H1 (cell line): ENCODE measurements at regions of chr17 and their contacts with region 1.

Region 1: GRCh38 chr17:77214743-77215142 is 74.0 kb downstream of the SEC14L1 start:
- DNase-seq: peak; percentile 27 to 63
- H3K4me3 ChIP-seq: no peak overlapping the region
- H3K27ac ChIP-seq: no peak overlapping the region
- H3K4me1 ChIP-seq: no peaks in the 10 kb centered on the region; a peak in 1 of 7 replicates
- H3K27me3 ChIP-seq: no peaks in the 10 kb centered on the region
- CTCF ChIP-seq: peak; percentile 87 to 99 (median 95)
- EP300 ChIP-seq: no peak
- POLR2A ChIP-seq: no peak
- RAD21 ChIP-seq: peak; percentile 67 to 77

Region 2: GRCh38 chr17:76935331-76935730 is 279.4 kb before region 1 on chr17:
- CTCF ChIA-PET with region 1: no interaction called
- POLR2A ChIA-PET with region 1: no interaction called
- DNase-seq: no peak
- H3K4me3 ChIP-seq: no peak overlapping the region
- H3K27ac ChIP-seq: no peak overlapping the region
- H3K4me1 ChIP-seq: peaks cover 0 to 3% (median under 1%) of the 10 kb centered on the region in 4 experiments; a peak in 2 of 7 replicates
- H3K27me3 ChIP-seq: no peaks in the 10 kb centered on the region
- CTCF ChIP-seq: no peak
- EP300 ChIP-seq: no peak
- POLR2A ChIP-seq: no peak
- RAD21 ChIP-seq: no peak

Region 3: DNA sequence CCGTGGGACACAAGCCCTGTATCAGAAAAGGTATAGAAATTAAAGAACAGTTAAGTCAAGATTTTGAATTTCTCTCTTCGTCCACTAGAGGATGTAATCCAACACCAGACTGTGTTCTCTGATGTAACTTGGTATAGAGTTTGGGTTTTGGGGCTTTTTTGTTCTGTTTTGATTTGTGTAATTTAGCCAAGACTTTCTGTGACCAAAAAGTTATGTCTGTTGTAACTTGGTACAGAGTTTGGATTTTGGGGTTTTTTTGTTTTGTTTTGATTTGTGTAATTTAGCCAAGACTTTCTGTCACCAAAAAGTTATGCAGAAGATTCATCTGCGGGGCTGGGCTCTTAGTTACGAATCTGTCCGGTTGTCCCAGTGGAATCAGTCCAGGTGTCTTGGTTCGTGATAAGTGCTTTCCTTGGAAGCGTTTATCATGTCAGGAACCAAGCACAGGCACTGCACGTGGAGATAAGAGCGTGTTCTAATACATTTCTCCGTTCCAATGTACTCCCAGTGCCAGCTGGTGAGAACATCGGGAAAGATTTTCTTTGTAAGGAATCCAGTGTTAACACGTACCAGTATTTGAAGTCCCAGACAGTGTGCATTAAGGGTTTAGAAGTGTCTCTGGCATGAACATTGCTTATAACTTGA is 118.1 kb before region 1 on chr17:
- CTCF ChIA-PET with region 1: interaction called, 10 read pairs
- POLR2A ChIA-PET with region 1: interaction called, 10 read pairs
- DNase-seq: no peak
- H3K4me3 ChIP-seq: no peak overlapping the region
- H3K27ac ChIP-seq: no peak overlapping the region
- H3K4me1 ChIP-seq: no peaks in the 10 kb centered on the region; a peak in 2 of 7 replicates
- H3K27me3 ChIP-seq: no peaks in the 10 kb centered on the region
- CTCF ChIP-seq: peak in 2 of 3 experiments; percentile 38 to 46; a peak in 2 of 4 replicates
- EP300 ChIP-seq: no peak
- POLR2A ChIP-seq: no peak
- RAD21 ChIP-seq: peak; percentile 52 to 58

Region 4: DNA sequence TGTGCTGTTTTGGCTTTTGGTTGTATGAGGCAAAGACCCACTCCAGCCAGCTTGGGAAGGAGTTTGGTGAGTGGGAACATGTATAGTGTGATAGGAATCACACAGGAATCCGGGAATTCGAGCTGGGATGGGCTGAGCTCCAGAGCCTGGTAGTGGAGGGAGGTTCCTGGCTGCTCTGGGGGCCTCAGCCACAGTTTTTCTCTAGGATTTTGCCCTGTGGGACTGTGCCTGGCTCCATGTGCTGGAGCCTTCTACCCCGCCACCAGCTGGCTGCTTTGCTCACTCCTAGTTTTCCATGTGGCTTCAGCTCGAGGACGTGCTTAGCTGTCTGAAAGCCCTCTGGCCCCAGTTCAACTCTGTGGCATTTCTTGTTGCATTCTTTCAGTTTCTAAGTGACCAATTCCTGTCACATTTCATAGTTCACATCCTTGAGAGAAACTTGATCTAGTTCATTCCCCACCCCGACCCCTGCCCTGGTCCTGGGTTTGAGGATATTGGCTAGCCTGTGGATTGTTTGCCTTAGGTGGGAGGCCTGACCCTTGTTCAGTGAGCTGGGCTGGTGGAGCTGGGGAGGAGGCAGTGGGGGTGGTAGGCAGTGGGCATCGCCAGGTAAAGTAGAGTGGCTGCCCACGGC is 69.0 kb before region 1 on chr17:
- CTCF ChIA-PET with region 1: interaction called, 15 read pairs
- POLR2A ChIA-PET with region 1: no interaction called
- DNase-seq: no peak
- H3K4me3 ChIP-seq: no peak overlapping the region
- H3K27ac ChIP-seq: no peak overlapping the region
- H3K4me1 ChIP-seq: peaks cover 6 to 19% (median 11%) of the 10 kb centered on the region in 4 experiments
- H3K27me3 ChIP-seq: no peaks in the 10 kb centered on the region
- CTCF ChIP-seq: peak in 1 of 3 experiments; percentile 17; a peak in 1 of 4 replicates
- EP300 ChIP-seq: no peak
- POLR2A ChIP-seq: no peak
- RAD21 ChIP-seq: peak in 1 of 2 experiments; percentile 20; a peak in 1 of 4 replicates

Region 5: GRCh38 chr17:77400445-77400870 is 185.7 kb after region 1 on chr17:
- CTCF ChIA-PET with region 1: no interaction called
- POLR2A ChIA-PET with region 1: no interaction called
- DNase-seq: no peak
- H3K4me3 ChIP-seq: no peak overlapping the region
- H3K27ac ChIP-seq: no peak overlapping the region
- H3K4me1 ChIP-seq: peaks cover 0 to 6% (median 1%) of the 10 kb centered on the region in 4 experiments; a peak in 5 of 7 replicates
- H3K27me3 ChIP-seq: no peaks in the 10 kb centered on the region
- CTCF ChIP-seq: peak; percentile 37 to 57 (median 55)
- EP300 ChIP-seq: no peak
- POLR2A ChIP-seq: no peak
- RAD21 ChIP-seq: peak; percentile 68 to 74